HCT116 (cell line): ENCODE measurements at regions of chr10 and their contacts with region 1.

Region 1: GRCh38 chr10:101214446-101215396 is 14.5 kb downstream of the LBX1 start:
- DNase-seq: peak; percentile 66
- ATAC-seq: peak; percentile 82
- H3K4me3 ChIP-seq: peak overlapping the region; percentile 55 to 63
- H3K27ac ChIP-seq: no peak overlapping the region
- H3K4me1 ChIP-seq: peaks cover 7 to 17% of the 10 kb centered on the region in 2 experiments; a peak in 2 of 4 replicates
- H3K27me3 ChIP-seq: 0 out of 2 replicates have a peak, but pooled peaks cover 3% of the 10 kb centered on the region
- CTCF ChIP-seq: peak; percentile 96 to 98 (median 97)
- POLR2A ChIP-seq: no peak
- RAD21 ChIP-seq: peak; percentile 99

Region 2: DNA sequence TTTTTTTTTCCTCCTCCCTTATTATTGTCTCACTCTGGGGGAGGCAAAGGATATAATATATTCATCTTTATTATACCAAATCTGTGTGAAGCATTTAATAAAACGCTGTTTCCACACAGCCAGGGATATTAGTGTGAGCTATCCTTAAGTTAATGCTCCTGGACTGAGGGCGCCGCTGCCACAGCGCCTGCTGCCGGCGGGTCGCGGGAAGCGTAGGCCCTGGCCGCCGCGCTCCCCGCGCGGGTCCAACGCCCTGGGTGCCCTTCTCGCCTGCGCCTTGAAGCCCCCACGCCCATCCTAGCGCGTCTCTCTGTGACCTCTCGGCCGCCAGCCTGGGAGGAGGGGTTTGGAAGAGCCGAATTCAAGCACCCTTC is 24.0 kb after region 1 on chr10:
- CTCF ChIA-PET with region 1: interaction called, 12 read pairs
- POLR2A ChIA-PET with region 1: no interaction called
- RAD21 ChIA-PET with region 1: no interaction called
- intact Hi-C with region 1: no loop called
- DNase-seq: peak; percentile 18
- ATAC-seq: peak; percentile 96
- H3K4me3 ChIP-seq: peak overlapping the region; percentile 26 to 29; a peak in 3 of 4 replicates
- H3K27ac ChIP-seq: no peak overlapping the region
- H3K4me1 ChIP-seq: peaks cover 3 to 13% of the 10 kb centered on the region in 2 experiments; a peak in 3 of 4 replicates
- H3K27me3 ChIP-seq: no peaks in the 10 kb centered on the region
- CTCF ChIP-seq: peak; percentile 75 to 100 (median 100)
- POLR2A ChIP-seq: no peak
- RAD21 ChIP-seq: no peak

Region 3: DNA sequence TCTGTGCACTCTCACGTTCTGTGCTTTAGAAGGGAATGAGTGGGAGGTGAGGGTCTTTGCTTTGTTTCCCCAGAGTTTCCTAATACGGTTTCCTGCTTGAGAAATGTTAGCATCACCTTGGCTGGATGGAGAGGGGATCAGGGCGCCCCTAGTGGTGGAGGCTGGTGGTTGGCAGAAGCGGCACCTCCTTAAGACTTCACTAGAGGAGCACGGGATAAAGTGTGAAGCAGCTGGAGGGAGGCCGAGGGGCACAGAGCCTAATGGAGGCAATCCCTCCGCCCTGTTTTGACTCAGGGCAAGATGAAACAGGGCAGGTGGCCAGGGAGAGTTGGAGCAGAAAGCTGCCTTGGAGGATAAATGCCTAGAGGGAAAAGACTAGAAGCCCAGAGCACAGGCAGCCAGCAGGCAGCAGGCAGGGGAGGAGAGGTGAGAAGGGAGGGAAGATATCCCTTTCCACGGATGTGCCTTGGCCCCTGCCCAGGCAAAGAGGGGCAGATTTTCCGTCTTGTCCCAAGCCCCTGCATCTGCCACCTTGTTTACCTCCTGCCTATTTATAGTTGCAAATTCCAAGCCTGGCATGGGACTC is 83.3 kb after region 1 on chr10:
- CTCF ChIA-PET with region 1: interaction called, 18 read pairs
- POLR2A ChIA-PET with region 1: no interaction called
- RAD21 ChIA-PET with region 1: interaction called in 1 of 2 experiments, 3 read pairs
- intact Hi-C with region 1: loop called (anchors 2 kb)
- DNase-seq: peak; percentile 64
- ATAC-seq: peak; percentile 94
- H3K4me3 ChIP-seq: no peak overlapping the region
- H3K27ac ChIP-seq: no peak overlapping the region
- H3K4me1 ChIP-seq: peaks cover 0 to 5% of the 10 kb centered on the region in 2 experiments; a peak in 3 of 4 replicates
- H3K27me3 ChIP-seq: no peaks in the 10 kb centered on the region
- CTCF ChIP-seq: peak; percentile 86 to 97 (median 97)
- POLR2A ChIP-seq: no peak
- RAD21 ChIP-seq: peak; percentile 63

Region 4: DNA sequence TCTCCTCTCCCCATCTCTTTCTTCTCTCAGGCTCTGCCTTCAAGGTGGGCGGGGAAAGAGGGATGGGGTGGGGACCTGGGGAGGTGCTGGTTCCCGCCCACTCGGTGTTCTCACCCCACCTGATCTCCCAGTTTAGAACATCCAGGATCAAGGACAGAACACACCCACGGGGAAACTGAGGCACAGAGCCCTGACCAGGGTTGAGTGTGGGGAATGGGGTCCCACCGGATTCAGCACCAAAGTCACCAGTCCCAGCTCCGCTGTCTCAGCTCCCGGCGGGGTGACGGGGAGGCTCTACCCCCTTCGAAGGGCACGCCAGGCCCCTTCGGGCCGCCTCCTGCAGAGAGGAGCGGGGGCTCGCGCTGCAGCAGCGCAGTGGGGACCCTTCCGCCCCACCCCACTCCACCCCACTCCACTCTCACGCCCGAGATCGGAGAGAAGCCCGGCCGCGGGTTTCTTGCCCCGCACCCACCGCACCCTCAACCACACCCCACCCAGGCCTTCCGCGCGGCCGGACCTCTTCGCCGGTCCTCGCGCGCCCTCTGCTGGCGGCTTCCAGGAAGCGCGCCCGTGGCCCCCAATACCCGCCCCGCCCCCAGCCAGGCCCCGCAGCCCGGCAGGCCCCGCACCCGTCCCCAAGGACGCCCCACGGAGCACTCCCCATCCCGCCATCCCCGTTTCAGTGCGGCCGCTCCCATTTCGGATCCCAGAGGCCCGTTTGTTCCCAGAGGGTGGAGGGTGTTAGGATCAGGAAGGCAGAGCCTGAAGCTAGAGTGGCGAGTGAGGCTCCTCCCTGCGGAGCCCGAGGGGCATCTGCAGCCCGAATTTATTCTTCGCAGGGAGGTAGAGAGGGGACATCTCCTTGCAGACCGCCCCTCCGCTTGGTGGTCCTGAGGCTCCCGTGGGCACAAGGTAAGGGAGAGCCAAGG is 355.4 kb after region 1 on chr10:
- CTCF ChIA-PET with region 1: interaction called, 130 read pairs
- POLR2A ChIA-PET with region 1: interaction called, 14 read pairs
- RAD21 ChIA-PET with region 1: interaction called, 26 to 31 read pairs
- intact Hi-C with region 1: loop called (anchors 1 kb)
- DNase-seq: peak; percentile 65
- ATAC-seq: peak; percentile 89
- H3K4me3 ChIP-seq: peak overlapping the region; percentile 62 to 66
- H3K27ac ChIP-seq: peak overlapping the region; percentile 48; the same call in 1 of the 2 replicates
- H3K4me1 ChIP-seq: peaks cover 11 to 22% of the 10 kb centered on the region in 2 experiments
- H3K27me3 ChIP-seq: no peaks in the 10 kb centered on the region
- CTCF ChIP-seq: peak in 2 of 3 experiments; percentile 82 to 87; a peak in 4 of 6 replicates
- POLR2A ChIP-seq: peak; percentile 11
- RAD21 ChIP-seq: no peak

Region 5: DNA sequence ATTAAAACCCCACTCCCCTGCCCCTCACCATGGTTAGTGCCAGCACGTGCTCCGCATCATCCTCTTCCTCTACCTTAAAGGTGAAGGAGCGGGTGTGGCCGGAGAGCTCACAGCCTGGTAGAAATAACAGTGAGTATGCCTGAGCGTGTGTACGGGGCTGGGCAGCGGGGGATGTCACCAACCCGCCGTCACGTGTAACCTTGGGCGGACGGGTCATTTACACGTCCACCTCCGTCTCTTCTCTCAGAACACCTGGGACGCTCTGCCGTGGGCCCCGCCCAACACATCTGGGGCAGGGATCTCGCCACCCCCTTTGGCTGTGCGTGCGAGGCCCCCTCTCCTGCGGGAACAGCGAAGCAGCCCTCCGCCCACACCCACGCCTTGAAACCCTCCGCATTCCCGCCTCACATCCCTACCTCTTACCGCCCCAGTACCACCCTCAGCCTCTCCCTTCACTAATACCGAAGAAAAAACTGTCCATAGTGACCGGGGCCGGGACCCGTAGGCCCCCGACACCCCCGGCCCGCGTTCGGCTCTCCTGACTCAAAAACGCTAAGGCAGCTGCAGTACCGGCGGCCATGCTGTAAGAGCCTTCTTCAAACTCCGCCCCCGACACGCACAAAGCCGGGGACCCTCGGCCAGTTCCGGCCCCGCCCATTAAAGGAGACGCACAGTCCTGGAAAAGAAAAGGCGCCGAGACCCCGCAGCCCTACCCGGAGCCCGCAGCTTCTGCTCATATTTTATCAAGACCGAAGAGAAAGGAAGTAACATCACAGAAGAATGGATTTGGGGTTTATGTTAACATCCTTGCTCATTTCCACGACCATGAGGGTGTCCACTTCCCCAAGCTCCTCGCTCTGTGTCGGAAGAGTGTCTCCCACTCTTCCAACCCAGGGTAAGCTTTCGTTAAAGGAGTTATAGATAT is 568.4 kb after region 1 on chr10 and contains the start of gene NPM3:
- CTCF ChIA-PET with region 1: interaction called, 58 read pairs
- POLR2A ChIA-PET with region 1: no interaction called
- RAD21 ChIA-PET with region 1: interaction called, 7 to 8 read pairs
- intact Hi-C with region 1: loop called (anchors 1 kb)
- DNase-seq: peak; percentile 59
- ATAC-seq: peak; percentile 74
- H3K4me3 ChIP-seq: peak within 1 kb of the TSS; percentile 74 to 90
- H3K27ac ChIP-seq: peak within 1 kb of the TSS; percentile 66
- H3K4me1 ChIP-seq: peaks cover 19 to 45% of the 10 kb centered on the region in 2 experiments
- H3K27me3 ChIP-seq: no peaks in the 10 kb centered on the region
- CTCF ChIP-seq: no peak
- POLR2A ChIP-seq: peak; percentile 65
- RAD21 ChIP-seq: no peak
- total RNA-seq, gene NPM3: 267 TPM